ENCODE measurements at regions of chr2 and their contacts with region 1.

Region 1: DNA sequence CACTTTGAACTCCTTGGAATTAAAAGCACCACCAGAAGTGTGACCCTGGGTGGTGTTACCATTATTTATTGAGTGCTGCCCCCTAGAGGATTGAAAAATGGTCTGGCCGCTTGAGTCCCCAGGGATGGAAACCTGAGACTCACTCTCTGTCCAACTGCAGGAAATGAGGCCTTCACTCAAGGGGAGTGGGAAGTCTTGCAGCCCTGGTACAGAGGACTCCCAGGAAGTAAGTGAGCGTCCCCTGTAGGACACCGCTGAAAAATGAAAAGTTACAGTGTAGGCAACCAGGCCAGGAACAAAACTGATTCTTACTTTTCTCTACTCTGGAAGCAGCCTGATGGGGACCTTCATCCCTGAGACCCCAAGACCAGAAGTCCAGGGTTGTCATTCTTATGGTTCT is 2.2 kb upstream of the NRP2 start:
- DNase-seq: no peak
- H3K4me3 ChIP-seq: no peak overlapping the region
- CTCF ChIP-seq: peak; percentile 51

Region 2: DNA sequence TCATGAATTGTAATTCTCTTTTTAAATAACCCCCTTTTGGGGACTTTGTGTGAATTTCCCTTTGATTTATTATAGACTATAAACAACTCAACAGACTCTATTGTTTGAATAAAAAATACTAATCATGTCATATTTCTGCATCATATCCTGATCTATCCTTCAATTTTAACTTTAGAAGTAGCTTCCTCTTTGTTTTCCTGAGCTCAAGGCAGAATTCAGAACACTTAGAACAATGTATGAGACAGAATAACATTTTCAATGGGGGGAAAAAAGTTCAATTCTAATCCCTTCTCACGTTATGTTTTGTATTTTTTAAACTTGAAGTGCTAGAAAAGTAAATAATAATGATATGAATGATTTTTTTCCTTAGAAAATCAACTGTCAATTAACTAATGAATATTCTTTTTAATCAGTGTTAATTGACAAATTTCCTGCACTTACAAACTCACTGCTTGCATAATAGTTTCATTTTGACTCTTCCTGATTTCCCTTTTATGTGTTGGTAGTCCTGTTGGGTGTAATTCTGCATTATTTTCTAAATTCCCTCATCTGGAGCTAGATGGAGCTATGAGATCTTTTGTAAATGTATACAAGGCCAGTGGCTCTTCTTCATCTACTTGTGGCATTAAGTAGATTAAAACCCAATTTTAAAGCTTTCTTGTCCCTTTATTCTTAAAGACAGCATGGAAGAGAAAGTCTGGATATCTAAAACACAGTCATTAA is 808.7 kb before region 1 on chr2:
- CTCF ChIA-PET with region 1: interaction called, 22 read pairs
- POLR2A ChIA-PET with region 1: interaction called, 6 read pairs
- DNase-seq: no peak
- H3K4me3 ChIP-seq: no peak overlapping the region
- CTCF ChIP-seq: peak; percentile 30

Region 3: GRCh38 chr2:205462681-205463345 is 217.3 kb before region 1 on chr2:
- CTCF ChIA-PET with region 1: no interaction called
- POLR2A ChIA-PET with region 1: no interaction called
- DNase-seq: no peak
- H3K4me3 ChIP-seq: no peak overlapping the region
- CTCF ChIP-seq: no peak

Region 4: DNA sequence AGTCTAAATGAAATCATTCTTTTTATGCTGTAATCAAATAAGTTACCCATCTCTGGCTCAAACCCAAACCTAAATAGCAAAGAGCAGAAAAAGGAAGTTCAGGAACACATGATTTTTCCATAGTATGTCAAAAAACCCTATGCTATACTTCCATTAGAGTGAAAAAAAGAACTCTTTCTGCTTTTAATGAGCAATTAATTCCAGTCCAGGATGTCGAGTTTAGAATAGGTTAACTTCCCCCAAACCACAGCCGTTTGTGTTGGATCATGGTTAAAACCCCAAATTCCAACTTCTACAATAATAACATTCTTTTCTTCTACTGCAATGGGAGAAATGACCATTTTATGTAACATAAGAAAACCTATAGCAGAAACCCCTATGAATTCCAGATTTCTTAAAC is 168.8 kb before region 1 on chr2:
- CTCF ChIA-PET with region 1: interaction called, 10 read pairs
- POLR2A ChIA-PET with region 1: no interaction called
- DNase-seq: peak; percentile 70
- H3K4me3 ChIP-seq: no peak overlapping the region
- CTCF ChIP-seq: no peak

Region 5: DNA sequence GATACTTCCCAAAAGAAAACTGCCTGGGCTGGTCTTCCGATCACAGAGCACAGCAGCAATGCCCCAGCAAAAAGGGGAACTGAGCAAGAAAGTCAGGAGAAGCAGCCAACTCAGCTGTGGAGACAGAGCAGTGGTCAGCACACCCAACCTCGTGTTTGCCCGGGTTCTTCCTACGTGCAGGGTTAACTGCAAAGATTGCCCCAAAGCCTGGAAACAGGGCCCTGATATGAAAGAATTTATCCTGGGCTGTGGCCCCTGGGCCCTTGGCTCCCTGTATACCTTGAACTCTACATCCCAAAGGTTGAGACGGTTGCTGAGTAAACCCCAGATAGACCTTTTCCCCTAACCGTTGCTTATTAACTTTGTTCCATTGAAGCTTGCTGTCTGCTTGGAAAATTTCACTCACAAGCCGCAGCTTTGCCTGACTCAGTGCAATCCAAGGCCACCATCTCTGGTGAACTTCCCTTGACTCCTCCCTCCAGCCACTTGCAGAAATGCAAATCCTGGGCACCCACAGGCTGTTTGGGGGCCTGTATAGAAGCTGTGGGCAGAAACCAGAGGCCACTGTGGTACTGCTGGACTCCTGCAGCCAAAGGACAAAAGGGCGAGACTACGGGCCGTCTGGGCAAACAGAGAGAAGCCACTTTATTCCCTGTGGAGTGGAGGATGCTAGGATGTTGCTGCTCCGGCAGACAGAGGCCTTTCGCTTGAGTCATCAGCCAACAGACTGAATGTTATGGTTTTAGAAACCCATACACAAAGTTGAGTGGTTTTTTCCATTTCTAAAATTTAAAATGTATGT is 20.5 kb after region 1 on chr2:
- CTCF ChIA-PET with region 1: interaction called, 6 read pairs
- POLR2A ChIA-PET with region 1: interaction called, 46 read pairs
- DNase-seq: no peak
- H3K4me3 ChIP-seq: no peak overlapping the region
- CTCF ChIP-seq: no peak

Region 6: DNA sequence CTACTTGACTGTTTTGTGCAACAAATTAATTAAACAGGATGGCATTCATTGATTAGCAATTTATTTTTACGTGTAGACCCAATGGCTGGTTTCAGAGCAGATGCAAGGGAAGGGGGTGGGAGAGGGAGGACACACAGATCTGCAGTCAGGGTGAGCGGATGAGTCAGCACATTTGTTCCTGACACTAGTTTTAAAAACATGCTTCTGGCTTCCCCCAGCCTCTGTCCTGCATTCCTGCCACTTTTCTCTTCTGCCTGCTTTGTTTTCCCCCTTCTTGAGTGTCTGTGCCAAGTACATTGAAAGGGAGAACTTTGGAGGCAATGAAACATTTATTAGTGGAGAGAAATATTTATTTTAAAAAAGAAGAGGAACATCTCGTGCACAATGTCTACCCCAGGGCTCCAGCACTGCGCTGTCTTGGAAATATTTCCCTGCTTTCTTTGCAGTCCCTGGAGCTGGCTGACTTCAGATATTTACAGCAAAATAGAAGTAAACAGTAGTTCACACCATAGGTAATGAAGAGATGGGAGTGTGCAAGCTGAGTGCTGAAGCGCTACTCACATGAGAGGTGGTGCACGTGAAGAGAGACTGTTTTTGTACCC is 54.5 kb after region 1 on chr2:
- CTCF ChIA-PET with region 1: interaction called, 11 read pairs
- POLR2A ChIA-PET with region 1: interaction called, 42 read pairs
- DNase-seq: peak; percentile 60
- H3K4me3 ChIP-seq: no peak overlapping the region
- CTCF ChIP-seq: no peak

Region 7: DNA sequence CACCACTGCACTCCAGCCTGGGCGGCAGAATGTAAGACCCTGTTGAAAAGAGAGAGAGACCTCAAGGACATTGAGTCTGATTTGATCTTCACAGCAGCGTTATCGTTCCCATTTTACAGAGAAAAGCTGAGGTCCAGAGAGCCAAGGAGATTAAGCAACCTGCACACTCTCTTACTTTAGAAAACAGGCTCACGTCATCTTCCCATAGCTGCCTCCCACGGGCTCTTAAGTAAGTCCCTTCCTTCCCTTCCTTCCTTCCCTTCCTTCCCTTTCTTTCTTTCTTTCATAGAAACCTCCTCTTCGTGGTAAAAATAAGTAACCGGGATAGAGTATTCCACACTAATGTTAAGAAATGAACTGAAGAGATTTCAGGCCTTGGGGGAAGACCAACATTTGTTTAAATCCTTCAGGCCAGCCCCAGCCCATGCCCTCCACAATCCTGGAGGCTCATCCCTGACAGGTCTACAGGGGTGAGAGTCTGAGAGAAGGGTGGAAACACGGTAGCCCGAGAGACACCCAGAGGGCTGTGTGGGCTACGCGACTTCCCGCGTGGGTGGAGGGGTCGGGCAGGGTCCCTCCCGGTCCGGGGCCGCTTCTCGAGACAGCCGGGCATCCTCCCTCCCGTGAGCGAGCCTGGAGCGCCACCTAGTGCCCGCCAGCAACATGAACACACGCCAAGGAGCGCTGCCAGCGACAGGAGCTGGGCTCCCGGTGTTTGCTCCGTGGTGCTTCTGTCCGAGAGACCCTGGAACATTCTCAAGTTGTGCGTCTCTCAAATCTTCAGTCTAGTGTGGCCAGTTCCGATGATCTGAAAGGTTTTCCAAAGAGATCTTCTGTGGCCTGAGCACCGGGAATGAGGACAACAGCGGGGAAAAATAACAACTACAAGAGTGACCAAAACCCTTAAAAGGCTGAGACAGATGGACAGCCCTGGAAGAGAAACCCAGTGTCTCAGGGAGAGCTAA is 245.6 kb after region 1 on chr2:
- CTCF ChIA-PET with region 1: interaction called, 12 read pairs
- POLR2A ChIA-PET with region 1: interaction called, 5 read pairs
- DNase-seq: no peak
- H3K4me3 ChIP-seq: peak overlapping the region; percentile 45
- CTCF ChIP-seq: peak; percentile 98